Heart left ventricle (tissue), 16 donors: ENCODE measurements at regions of chr12 and their contacts with region 1.

Region 1: DNA sequence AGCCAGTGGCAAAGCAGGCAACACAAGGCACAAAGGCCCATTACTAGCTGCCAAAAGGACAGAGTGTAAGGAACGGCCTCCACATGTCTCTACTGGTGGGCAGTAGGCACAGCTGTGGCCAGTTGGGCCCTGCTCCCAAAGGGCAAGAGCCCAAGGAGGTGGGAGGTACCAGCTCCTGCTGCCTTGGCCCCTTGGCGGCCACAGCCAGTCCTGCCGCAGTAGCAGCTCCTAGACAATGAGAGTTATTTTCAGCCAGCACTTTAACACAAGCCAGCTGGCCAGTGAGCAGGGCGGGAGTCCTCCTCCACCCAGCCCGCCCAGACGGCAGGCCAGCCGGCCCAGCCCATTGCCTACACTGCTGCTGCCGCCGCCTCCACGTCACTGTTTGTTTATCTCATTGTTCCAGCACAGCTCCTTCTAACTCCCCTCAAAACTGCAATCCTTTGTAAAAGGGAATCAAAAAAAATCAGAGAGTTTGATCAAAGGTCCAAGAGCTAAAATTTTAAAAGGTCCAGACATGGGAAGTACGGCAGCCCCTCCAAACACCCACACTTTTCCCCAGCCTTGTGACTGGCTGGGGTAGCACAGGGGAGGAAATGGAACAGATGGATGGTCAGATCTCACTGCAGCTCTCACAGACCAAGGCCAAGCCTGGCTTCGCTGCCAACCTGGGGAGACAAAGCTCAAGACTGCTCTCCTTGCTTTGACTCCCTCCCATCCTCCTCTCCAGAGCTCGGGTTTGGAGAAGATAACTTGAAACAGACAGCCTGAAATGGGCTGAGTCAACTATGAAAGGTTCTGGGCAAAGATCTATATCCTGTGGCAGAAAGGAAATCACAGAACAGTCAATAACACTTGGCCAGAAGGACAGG is 33.5 kb downstream of the FMNL3 start:
- DNase-seq: peak; percentile 93 to 96 (median 95)
- ATAC-seq: peak; percentile 96 to 99 (median 97)
- H3K4me3 ChIP-seq: peak overlapping the region in 5 of 12 donors; percentile 2 to 34 (median 20)
- H3K27ac ChIP-seq: peak overlapping the region; percentile 84 to 99 (median 92)
- H3K4me1 ChIP-seq: peaks cover 43 to 83% (median 69%) of the 10 kb centered on the region in 12 donors
- H3K27me3 ChIP-seq: no peaks in the 10 kb centered on the region
- CTCF ChIP-seq: peak in 11 of 12 donors; percentile 6 to 59 (median 43)
- POLR2A ChIP-seq: peak; percentile 34 to 81

Region 2: GRCh38 chr12:49644620-49644994 is 29.1 kb before region 1 on chr12:
- intact Hi-C with region 1: loop called in 2 of 10 experiments (anchors 2 kb)
- DNase-seq: peak; percentile 78 to 89 (median 84)
- ATAC-seq: peak; percentile 71 to 82 (median 78)
- H3K4me3 ChIP-seq: no peak overlapping the region
- H3K27ac ChIP-seq: peak overlapping the region in 8 of 12 donors; percentile 23 to 79 (median 48)
- H3K4me1 ChIP-seq: peaks cover 0 to 55% (median 40%) of the 10 kb centered on the region in 12 donors
- H3K27me3 ChIP-seq: no peaks in the 10 kb centered on the region
- CTCF ChIP-seq: peak; percentile 89 to 98 (median 94)
- POLR2A ChIP-seq: no peak

Region 3: GRCh38 chr12:49662998-49663843 is 10.5 kb before region 1 on chr12:
- intact Hi-C with region 1: loop called in 2 of 10 experiments (anchors 1 kb)
- DNase-seq: peak; percentile 84 to 90 (median 87)
- ATAC-seq: peak; percentile 66 to 93 (median 90)
- H3K4me3 ChIP-seq: peak overlapping the region in 3 of 12 donors; percentile 5 to 29 (median 11)
- H3K27ac ChIP-seq: peak overlapping the region; percentile 71 to 92 (median 85)
- H3K4me1 ChIP-seq: peaks cover 18 to 95% (median 83%) of the 10 kb centered on the region in 12 donors
- H3K27me3 ChIP-seq: no peaks in the 10 kb centered on the region
- CTCF ChIP-seq: no peak
- POLR2A ChIP-seq: no peak

Region 4: GRCh38 chr12:49693994-49694393 is 20.3 kb after region 1 on chr12:
- intact Hi-C with region 1: loop called in 1 of 10 experiments (anchors 2 kb)
- DNase-seq: no peak
- ATAC-seq: no peak
- H3K4me3 ChIP-seq: no peak overlapping the region
- H3K27ac ChIP-seq: no peak overlapping the region
- H3K4me1 ChIP-seq: peaks cover 0 to 74% (median 37%) of the 10 kb centered on the region in 12 donors
- H3K27me3 ChIP-seq: no peaks in the 10 kb centered on the region
- CTCF ChIP-seq: no peak
- POLR2A ChIP-seq: no peak